IMR-90 (cell line): ENCODE measurements at regions of chr1 and their contacts with region 1.

Region 1: GRCh38 chr1:155277070-155277895 is at the start of gene HCN3:
- DNase-seq: peak; percentile 93
- ATAC-seq: peak; percentile 83
- H3K4me3 ChIP-seq: peak within 1 kb of the TSS; percentile 69
- H3K27ac ChIP-seq: peak within 1 kb of the TSS; percentile 28; the same call in 1 of the 2 replicates
- H3K4me1 ChIP-seq: peaks cover 1% of the 10 kb centered on the region
- H3K27me3 ChIP-seq: no peaks in the 10 kb centered on the region
- CTCF ChIP-seq: peak; percentile 78
- POLR2A ChIP-seq: no peak
- RAD21 ChIP-seq: peak; percentile 49
- total RNA-seq, gene HCN3: 0.36 and 0.83 TPM in 2 replicates

Region 2: GRCh38 chr1:155308493-155309422 is 31.5 kb after region 1 on chr1 and contains the start of gene FDPS:
- CTCF ChIA-PET with region 1: no interaction called
- POLR2A ChIA-PET with region 1: no interaction called
- dilution Hi-C with region 1: no loop called
- in situ Hi-C with region 1: no loop called
- intact Hi-C with region 1: loop called (anchors 1 kb)
- DNase-seq: peak; percentile 99
- ATAC-seq: peak; percentile 99
- H3K4me3 ChIP-seq: peak within 1 kb of the TSS; percentile 62
- H3K27ac ChIP-seq: peak within 1 kb of the TSS; percentile 72
- H3K4me1 ChIP-seq: peaks cover 4% of the 10 kb centered on the region
- H3K27me3 ChIP-seq: no peaks in the 10 kb centered on the region
- CTCF ChIP-seq: no peak
- POLR2A ChIP-seq: peak; percentile 84
- RAD21 ChIP-seq: no peak
- total RNA-seq, gene FDPS: 176 and 191 TPM in 2 replicates

Region 3: GRCh38 chr1:155591770-155592169 is 314.5 kb after region 1 on chr1:
- CTCF ChIA-PET with region 1: no interaction called
- POLR2A ChIA-PET with region 1: no interaction called
- dilution Hi-C with region 1: no loop called
- in situ Hi-C with region 1: no loop called
- intact Hi-C with region 1: loop called (anchors 5 kb)
- DNase-seq: peak; percentile 68
- ATAC-seq: peak; percentile 76
- H3K4me3 ChIP-seq: no peak overlapping the region
- H3K27ac ChIP-seq: no peak overlapping the region
- H3K4me1 ChIP-seq: no peaks in the 10 kb centered on the region
- H3K27me3 ChIP-seq: no peaks in the 10 kb centered on the region
- CTCF ChIP-seq: peak; percentile 60
- POLR2A ChIP-seq: no peak
- RAD21 ChIP-seq: peak; percentile 69